Activated CD8-positive, alpha-beta memory T cell treated with anti-CD3 and anti-CD28 coated beads, Interleukin-2, amount 10 ng/mL, durations not matched to agents 7 days and 5 days (primary cell): ENCODE measurements at regions of chr20 and their contacts with region 1.

Region 1: GRCh38 chr20:43749734-43750294 is 23.0 kb upstream of the GTSF1L start:
- DNase-seq: peak; percentile 84
- ATAC-seq: no peak
- H3K4me3 Mint-ChIP-seq: no peak overlapping the region
- H3K27ac Mint-ChIP-seq: peak overlapping the region; percentile 72
- H3K4me1 Mint-ChIP-seq: peaks cover 50% of the 10 kb centered on the region
- H3K27me3 Mint-ChIP-seq: peaks cover 20% of the 10 kb centered on the region

Region 2: DNA sequence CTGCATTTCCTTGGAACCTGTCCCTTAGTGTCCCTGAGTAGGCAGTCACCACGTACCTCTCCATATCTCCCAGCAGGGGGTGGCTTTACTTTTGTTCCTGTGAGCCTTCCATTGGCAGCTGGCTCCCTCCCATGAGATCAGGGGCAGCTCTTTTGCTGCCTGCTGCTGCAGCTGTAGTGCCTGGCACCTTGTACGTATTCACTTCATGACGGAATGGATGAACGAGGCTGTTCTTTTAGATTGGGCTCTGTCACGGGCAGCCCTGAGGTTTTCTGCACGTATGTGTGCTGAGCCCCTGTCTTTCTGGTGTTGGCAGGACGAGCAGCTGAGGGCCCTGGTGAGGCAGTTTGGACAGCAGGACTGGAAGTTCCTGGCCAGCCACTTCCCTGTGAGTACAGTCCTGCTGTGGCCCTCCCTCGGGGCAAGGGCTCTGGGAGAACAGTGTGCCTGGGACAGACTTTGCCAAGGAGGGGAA is 68.3 kb before region 1 on chr20:
- CTCF ChIA-PET with region 1: no interaction called
- DNase-seq: no peak
- ATAC-seq: no peak
- H3K4me3 Mint-ChIP-seq: no peak overlapping the region
- H3K27ac Mint-ChIP-seq: no peak overlapping the region
- H3K4me1 Mint-ChIP-seq: peaks cover 3% of the 10 kb centered on the region
- H3K27me3 Mint-ChIP-seq: no peaks in the 10 kb centered on the region

Region 3: GRCh38 chr20:43711098-43711654 is 38.6 kb before region 1 on chr20:
- CTCF ChIA-PET with region 1: no interaction called
- DNase-seq: no peak
- ATAC-seq: no peak
- H3K4me3 Mint-ChIP-seq: no peak overlapping the region
- H3K27ac Mint-ChIP-seq: no peak overlapping the region
- H3K4me1 Mint-ChIP-seq: no peaks in the 10 kb centered on the region
- H3K27me3 Mint-ChIP-seq: no peaks in the 10 kb centered on the region

Region 4: DNA sequence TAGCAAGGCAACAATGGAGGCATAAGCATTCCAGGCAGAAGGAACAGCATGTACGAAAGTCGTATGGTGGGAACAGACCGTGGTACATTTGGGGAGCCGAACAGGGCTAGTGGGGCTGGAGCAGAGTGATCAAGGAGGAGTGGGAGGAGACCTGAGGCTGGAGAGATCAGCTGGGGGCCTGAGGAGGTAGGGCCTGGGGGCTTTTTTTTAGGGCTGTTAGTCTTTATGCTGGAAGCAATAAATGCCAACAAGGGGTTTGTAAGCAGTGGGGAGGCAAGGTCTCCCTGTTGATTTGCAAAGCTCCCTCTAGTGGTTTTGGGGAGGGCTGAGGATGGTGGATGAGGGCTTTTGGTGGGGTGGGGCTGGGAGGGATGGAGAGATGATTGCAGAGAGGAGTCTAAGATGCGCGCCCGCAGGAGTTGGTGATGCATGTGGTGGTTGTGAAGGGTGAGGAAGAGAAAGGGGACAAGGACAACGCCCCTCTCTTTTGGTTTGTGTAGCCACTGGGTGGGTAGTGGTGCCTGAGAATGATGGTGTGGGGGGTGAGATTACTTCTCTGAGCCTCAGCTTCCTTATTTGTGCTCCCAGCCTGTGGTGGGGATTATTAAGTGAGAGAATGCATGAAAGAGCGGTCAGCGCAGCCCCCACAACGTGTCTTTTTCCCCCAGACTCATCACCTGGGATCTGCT is 90.7 kb after region 1 on chr20:
- CTCF ChIA-PET with region 1: interaction called, 40 read pairs
- DNase-seq: peak; percentile 82
- ATAC-seq: peak; percentile 63
- H3K4me3 Mint-ChIP-seq: peak overlapping the region; percentile 31
- H3K27ac Mint-ChIP-seq: peak overlapping the region; percentile 66
- H3K4me1 Mint-ChIP-seq: peaks cover 58% of the 10 kb centered on the region
- H3K27me3 Mint-ChIP-seq: peaks cover 36% of the 10 kb centered on the region

Region 5: DNA sequence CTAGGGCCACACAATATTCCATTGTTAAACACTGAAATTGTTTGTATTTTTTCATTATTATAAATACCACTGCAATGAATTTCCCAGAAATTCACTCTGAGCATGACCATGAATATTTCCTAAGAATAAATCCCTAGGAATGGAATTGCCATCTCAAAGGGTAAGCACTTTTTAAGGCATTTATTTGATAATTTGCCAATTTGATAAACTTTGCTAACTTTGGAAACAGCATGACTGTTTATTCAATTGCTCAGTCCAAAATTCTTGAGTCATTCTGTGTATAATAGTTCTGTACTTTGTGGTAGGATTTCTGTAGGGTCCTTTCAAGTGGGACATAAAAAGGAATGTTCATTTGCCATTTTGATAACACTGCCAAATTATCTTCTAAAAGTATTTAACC is 120.7 kb after region 1 on chr20:
- CTCF ChIA-PET with region 1: no interaction called
- DNase-seq: no peak
- ATAC-seq: no peak
- H3K4me3 Mint-ChIP-seq: no peak overlapping the region
- H3K27ac Mint-ChIP-seq: no peak overlapping the region
- H3K4me1 Mint-ChIP-seq: no peaks in the 10 kb centered on the region
- H3K27me3 Mint-ChIP-seq: peaks cover 23% of the 10 kb centered on the region

Region 6: GRCh38 chr20:43942661-43943290 is 193.0 kb after region 1 on chr20:
- CTCF ChIA-PET with region 1: interaction called, 15 read pairs
- DNase-seq: peak; percentile 53
- ATAC-seq: peak; percentile 85
- H3K4me3 Mint-ChIP-seq: peak overlapping the region; percentile 28
- H3K27ac Mint-ChIP-seq: peak overlapping the region; percentile 92
- H3K4me1 Mint-ChIP-seq: peaks cover 59% of the 10 kb centered on the region
- H3K27me3 Mint-ChIP-seq: peaks cover 51% of the 10 kb centered on the region

Region 7: DNA sequence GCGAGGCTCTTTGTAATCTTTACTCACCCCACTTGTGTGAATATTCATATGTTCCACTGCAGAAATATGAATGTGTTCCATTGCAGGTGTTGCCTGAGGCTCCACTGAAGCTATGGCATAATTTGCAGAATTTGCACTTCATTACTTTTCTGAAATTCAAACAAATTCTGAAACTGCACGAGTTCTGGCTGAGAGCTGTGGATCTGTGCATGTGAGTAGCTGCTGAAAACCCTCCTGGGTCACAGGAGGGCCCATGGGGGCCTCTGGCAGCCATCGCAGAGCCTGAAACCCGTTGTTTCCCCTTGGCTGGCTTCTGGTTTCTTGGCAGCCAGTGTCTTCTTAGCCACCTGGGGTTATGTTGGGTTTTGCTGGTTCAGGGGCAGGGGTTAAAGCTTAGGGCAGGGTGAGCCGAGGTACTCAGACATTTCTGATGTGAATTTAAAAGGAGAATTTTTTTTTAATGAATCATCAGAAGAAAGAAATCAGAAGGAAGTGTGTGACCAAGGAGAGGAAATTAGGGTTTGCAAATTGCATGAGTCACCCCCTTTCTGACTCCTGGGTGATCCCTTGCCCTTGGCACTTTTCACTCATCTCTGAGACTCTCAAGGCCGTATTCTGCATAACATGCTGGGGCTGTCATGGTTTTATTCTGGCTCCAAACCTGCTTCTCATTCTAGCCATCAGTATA is 205.4 kb after region 1 on chr20:
- CTCF ChIA-PET with region 1: interaction called, 14 read pairs
- DNase-seq: peak; percentile 78
- ATAC-seq: peak; percentile 87
- H3K4me3 Mint-ChIP-seq: peak overlapping the region; percentile 9
- H3K27ac Mint-ChIP-seq: peak overlapping the region; percentile 56
- H3K4me1 Mint-ChIP-seq: peaks cover 71% of the 10 kb centered on the region
- H3K27me3 Mint-ChIP-seq: peaks cover 54% of the 10 kb centered on the region

Region 8: GRCh38 chr20:44018259-44018941 is 268.6 kb after region 1 on chr20:
- CTCF ChIA-PET with region 1: interaction called, 12 read pairs
- DNase-seq: no peak
- ATAC-seq: no peak
- H3K4me3 Mint-ChIP-seq: no peak overlapping the region
- H3K27ac Mint-ChIP-seq: no peak overlapping the region
- H3K4me1 Mint-ChIP-seq: peaks cover 27% of the 10 kb centered on the region
- H3K27me3 Mint-ChIP-seq: peaks cover 88% of the 10 kb centered on the region

Region 9: DNA sequence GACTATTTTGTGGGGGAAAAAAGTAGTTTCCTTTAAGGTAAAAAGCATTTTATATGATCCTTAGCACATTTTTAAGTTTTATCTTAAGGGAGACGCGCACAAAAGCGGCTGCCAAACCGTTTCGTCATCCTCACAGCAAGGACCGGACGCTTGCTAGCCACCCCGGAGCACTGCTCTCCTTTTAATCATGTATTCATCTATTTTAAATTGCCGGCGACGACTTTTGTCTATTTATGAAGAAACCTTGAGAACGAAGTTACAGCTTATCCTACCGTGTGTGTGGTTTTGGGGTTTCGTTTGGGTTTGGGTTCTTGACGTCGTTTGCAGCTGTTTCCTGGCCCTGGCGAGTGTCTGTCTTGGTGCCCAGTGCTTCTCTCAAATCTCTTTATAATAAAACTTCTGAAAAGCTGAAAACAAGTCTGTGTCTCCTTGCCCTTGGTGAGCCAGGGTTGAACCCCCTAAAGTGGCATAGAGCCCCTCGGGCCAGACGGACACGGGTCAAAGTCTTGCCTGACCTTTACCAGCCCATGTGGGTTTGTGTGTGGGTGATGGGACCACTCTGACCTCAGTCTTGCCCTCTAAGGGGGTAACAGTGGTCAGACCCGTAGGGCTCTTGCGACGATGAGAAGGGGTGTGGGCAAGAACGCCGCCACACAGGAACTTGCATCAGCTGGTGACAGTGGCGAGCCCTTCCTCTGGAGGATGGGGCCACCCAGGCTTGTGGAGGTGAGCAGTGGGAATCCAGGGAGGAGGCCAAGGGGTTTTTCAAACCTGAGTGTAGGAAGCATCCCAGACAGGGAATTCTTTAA is 319.6 kb after region 1 on chr20:
- CTCF ChIA-PET with region 1: interaction called, 40 read pairs
- DNase-seq: peak; percentile 90
- ATAC-seq: peak; percentile 74
- H3K4me3 Mint-ChIP-seq: peak overlapping the region; percentile 56
- H3K27ac Mint-ChIP-seq: peak overlapping the region; percentile 91
- H3K4me1 Mint-ChIP-seq: peaks cover 37% of the 10 kb centered on the region
- H3K27me3 Mint-ChIP-seq: peaks cover 36% of the 10 kb centered on the region

Region 10: GRCh38 chr20:44080646-44081267 is 330.9 kb after region 1 on chr20:
- CTCF ChIA-PET with region 1: interaction called, 101 read pairs
- DNase-seq: peak; percentile 83
- ATAC-seq: peak; percentile 95
- H3K4me3 Mint-ChIP-seq: no peak overlapping the region
- H3K27ac Mint-ChIP-seq: no peak overlapping the region
- H3K4me1 Mint-ChIP-seq: peaks cover 10% of the 10 kb centered on the region
- H3K27me3 Mint-ChIP-seq: peaks cover 31% of the 10 kb centered on the region